ENCODE measurements at regions of chr19 and their contacts with region 1.

Region 1: GRCh38 chr19:11887611-11888531 is at the start of gene ZNF69:
- DNase-seq: peak; percentile 78
- ATAC-seq: peak; percentile 92
- H3K4me3 Mint-ChIP-seq: peak within 1 kb of the TSS; percentile 83
- H3K27ac Mint-ChIP-seq: peak within 1 kb of the TSS; percentile 84
- H3K4me1 Mint-ChIP-seq: peaks cover 20% of the 10 kb centered on the region
- H3K27me3 Mint-ChIP-seq: no peaks in the 10 kb centered on the region
- total RNA-seq, gene ZNF69: 2.4 to 2.5 TPM

Region 2: DNA sequence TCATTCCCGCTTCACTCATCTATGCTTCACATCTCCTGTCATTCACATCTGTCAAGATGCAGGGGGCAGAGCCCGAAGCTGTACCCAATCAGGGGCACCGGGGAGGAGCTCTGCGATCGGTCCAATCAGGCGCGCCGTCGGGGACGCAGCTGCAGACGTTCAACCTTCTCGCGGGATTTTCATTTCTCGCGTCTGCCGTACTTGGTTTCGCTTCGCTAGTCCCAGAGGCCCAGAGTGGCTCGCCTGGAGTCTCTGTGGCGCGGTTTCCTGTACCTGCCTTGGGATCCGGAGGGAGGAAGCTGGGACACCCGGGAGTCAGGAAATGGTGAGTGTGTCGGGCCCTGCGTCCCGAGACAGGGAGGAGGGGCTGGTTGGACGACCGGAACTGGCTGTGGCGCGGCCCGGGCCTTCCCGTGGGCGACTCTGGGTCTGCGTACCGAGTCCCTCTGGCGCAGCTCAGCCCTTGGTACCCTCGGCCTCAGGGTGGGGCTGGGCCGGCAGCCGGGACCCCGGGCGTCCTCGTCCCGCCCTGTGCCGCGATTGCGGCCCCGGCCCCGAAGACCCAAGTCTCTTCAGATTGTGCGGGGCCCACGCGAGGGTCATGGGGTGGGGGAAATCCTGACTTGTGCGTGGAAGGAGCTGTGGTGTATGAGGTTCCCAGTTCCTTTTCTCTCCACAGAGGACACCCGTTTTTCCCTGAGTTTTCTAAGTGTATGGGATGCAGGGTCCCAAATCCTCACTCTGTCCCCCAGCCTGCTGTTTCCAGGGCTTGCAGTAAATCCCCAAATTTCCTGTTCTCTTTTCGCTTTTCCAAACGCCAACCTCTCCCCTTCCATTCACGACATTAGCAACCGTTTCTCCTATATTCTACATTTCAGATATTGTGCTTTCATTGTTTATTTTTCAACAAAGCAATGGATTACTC is 275.3 kb after region 1 on chr19 and contains the start of gene ZNF136:
- CTCF ChIA-PET with region 1: no interaction called
- POLR2A ChIA-PET with region 1: interaction called, 10 read pairs
- intact Hi-C with region 1: no loop called
- DNase-seq: peak; percentile 97
- ATAC-seq: peak; percentile 100
- H3K4me3 Mint-ChIP-seq: peak within 1 kb of the TSS; percentile 98
- H3K27ac Mint-ChIP-seq: peak within 1 kb of the TSS; percentile 99
- H3K4me1 Mint-ChIP-seq: peaks cover 38% of the 10 kb centered on the region
- H3K27me3 Mint-ChIP-seq: no peaks in the 10 kb centered on the region
- total RNA-seq, gene ZNF136: 11.7 to 12.9 TPM